CD4-positive, alpha-beta T cell (primary cell): ENCODE measurements at regions of chr19 and their contacts with region 1.

Region 1: GRCh38 chr19:58002384-58003173 is at the start of gene ZNF606:
- DNase-seq: peak; percentile 69 to 93 (median 81)
- ATAC-seq: peak; percentile 96
- H3K4me3 ChIP-seq: peak within 1 kb of the TSS; percentile 95
- H3K4me3 Mint-ChIP-seq: peak within 1 kb of the TSS; percentile 90
- H3K27ac ChIP-seq: peak within 1 kb of the TSS; percentile 71 to 87
- H3K27ac Mint-ChIP-seq: peak within 1 kb of the TSS; percentile 93
- H3K4me1 ChIP-seq: peaks cover 24% of the 10 kb centered on the region
- H3K4me1 Mint-ChIP-seq: peaks cover 23% of the 10 kb centered on the region
- H3K27me3 ChIP-seq: no peaks in the 10 kb centered on the region
- H3K27me3 Mint-ChIP-seq: no peaks in the 10 kb centered on the region
- CTCF ChIP-seq: no peak
- total RNA-seq, gene ZNF606: 11.1 to 13.6 TPM

Region 2: GRCh38 chr19:57888560-57889231 is 113.9 kb before region 1 on chr19 and contains the start of gene ZNF814:
- CTCF ChIA-PET with region 1: no interaction called
- POLR2A ChIA-PET with region 1: interaction called, 15 read pairs
- intact Hi-C with region 1: no loop called
- DNase-seq: peak; percentile 58 to 88 (median 79)
- ATAC-seq: peak; percentile 92
- H3K4me3 ChIP-seq: peak within 1 kb of the TSS; percentile 91
- H3K4me3 Mint-ChIP-seq: peak within 1 kb of the TSS; percentile 90
- H3K27ac ChIP-seq: peak within 1 kb of the TSS; percentile 52 to 61
- H3K27ac Mint-ChIP-seq: peak within 1 kb of the TSS; percentile 81
- H3K4me1 ChIP-seq: peaks cover 24% of the 10 kb centered on the region
- H3K4me1 Mint-ChIP-seq: peaks cover 28% of the 10 kb centered on the region
- H3K27me3 ChIP-seq: no peaks in the 10 kb centered on the region
- H3K27me3 Mint-ChIP-seq: no peaks in the 10 kb centered on the region
- CTCF ChIP-seq: peak; percentile 19
- total RNA-seq, gene ZNF814: 29.0 to 34.7 TPM

Region 3: DNA sequence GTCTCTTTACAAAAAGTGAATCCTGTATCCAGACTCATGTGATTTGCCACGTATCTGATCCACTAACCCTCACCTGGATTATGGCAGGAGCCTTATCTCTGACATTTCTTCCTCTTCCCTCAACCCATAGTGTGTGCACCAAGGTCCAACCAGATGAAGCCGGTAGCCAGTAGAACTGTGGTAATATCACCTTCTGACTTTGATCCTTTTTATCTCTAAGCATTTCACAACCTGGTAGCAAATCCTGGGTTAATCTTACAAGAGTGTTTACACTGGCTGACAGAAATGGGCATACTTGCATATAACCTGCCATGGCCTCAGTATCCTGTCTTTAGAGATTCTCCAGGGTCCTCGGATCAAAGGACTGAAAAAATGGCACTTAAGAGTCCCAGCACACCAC is 88.0 kb before region 1 on chr19:
- CTCF ChIA-PET with region 1: interaction called, 3 read pairs
- POLR2A ChIA-PET with region 1: interaction called, 16 read pairs
- intact Hi-C with region 1: loop called in 1 of 2 experiments (anchors 2 kb)
- DNase-seq: no peak
- ATAC-seq: no peak
- H3K4me3 ChIP-seq: no peak overlapping the region
- H3K4me3 Mint-ChIP-seq: peak overlapping the region; percentile 93
- H3K27ac ChIP-seq: no peak overlapping the region
- H3K27ac Mint-ChIP-seq: peak overlapping the region; percentile 92
- H3K4me1 ChIP-seq: peaks cover 14% of the 10 kb centered on the region
- H3K4me1 Mint-ChIP-seq: peaks cover 39% of the 10 kb centered on the region
- H3K27me3 ChIP-seq: no peaks in the 10 kb centered on the region
- H3K27me3 Mint-ChIP-seq: no peaks in the 10 kb centered on the region
- CTCF ChIP-seq: no peak

Region 4: GRCh38 chr19:58059003-58059670 is 56.6 kb after region 1 on chr19 and contains the start of gene ZNF135:
- CTCF ChIA-PET with region 1: no interaction called
- POLR2A ChIA-PET with region 1: interaction called, 13 read pairs
- intact Hi-C with region 1: no loop called
- DNase-seq: peak; percentile 22 to 74 (median 50)
- ATAC-seq: peak; percentile 94
- H3K4me3 ChIP-seq: peak within 1 kb of the TSS; percentile 42
- H3K4me3 Mint-ChIP-seq: peak within 1 kb of the TSS; percentile 87
- H3K27ac ChIP-seq: peak within 1 kb of the TSS in 1 of 2 donors; percentile 2
- H3K27ac Mint-ChIP-seq: peak within 1 kb of the TSS; percentile 84
- H3K4me1 ChIP-seq: peaks cover 12% of the 10 kb centered on the region
- H3K4me1 Mint-ChIP-seq: peaks cover 6% of the 10 kb centered on the region
- H3K27me3 ChIP-seq: peaks cover 0 to 18% of the 10 kb centered on the region in 2 experiments
- H3K27me3 Mint-ChIP-seq: peaks cover 26% of the 10 kb centered on the region
- CTCF ChIP-seq: no peak
- total RNA-seq, gene ZNF135: 1.2 to 1.4 TPM

Region 5: DNA sequence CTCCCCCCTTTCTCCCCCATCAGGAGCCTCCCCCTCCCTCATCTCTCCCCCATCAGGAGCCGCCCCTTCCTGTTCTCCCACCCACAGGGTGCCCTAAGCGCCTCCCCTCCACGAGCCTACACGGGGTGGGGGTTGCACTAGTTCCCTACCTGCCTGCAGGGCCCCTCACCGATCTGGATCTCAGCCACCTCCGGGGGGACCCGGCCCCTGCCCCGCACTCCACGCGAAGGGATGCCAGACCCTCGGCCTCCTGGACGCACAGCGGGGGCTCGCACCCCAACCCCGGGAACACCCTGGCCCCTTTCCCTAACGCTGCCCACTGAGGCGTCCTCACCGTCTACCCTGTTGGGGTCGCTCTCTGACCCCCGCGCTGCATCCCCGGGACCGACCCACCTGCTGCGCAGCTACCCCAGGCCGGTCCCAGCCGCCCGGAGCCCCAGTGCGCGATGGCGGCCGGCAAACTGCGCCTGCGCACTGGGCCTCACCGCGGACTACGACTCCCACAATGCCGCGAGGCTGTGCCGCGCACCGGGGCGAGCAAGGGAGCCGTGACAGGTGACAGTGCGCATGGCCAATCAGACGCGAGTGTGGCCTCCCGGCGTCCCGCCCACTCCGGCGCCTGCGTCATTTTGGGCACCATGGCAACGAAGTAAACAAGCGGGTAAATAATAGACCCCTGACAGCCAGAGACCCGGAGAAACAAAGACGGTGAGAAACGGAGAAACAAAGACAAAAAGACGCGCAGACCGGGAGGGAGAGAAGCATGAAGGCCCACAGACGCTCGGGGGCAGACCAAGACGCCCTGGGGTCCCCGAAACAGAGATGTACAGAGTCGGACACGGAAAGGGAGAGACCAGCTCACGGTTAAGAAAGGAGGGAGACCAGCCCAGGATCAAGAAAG is 95.5 kb after region 1 on chr19 and contains the start of gene ZSCAN18:
- CTCF ChIA-PET with region 1: interaction called, 3 read pairs
- POLR2A ChIA-PET with region 1: interaction called, 7 read pairs
- intact Hi-C with region 1: loop called in 1 of 2 experiments (anchors 5 kb)
- DNase-seq: peak; percentile 89 to 99 (median 97)
- ATAC-seq: peak; percentile 95
- H3K4me3 ChIP-seq: peak within 1 kb of the TSS; percentile 95
- H3K4me3 Mint-ChIP-seq: peak within 1 kb of the TSS; percentile 84
- H3K27ac ChIP-seq: peak within 1 kb of the TSS; percentile 96 to 100
- H3K27ac Mint-ChIP-seq: peak within 1 kb of the TSS; percentile 97
- H3K4me1 ChIP-seq: peaks cover 22% of the 10 kb centered on the region
- H3K4me1 Mint-ChIP-seq: peaks cover 13% of the 10 kb centered on the region
- H3K27me3 ChIP-seq: no peaks in the 10 kb centered on the region
- H3K27me3 Mint-ChIP-seq: no peaks in the 10 kb centered on the region
- CTCF ChIP-seq: no peak
- total RNA-seq, gene ZSCAN18: 57.1 to 58.8 TPM